ENCODE measurements at regions of chr11 and their contacts with region 1.

Region 1: GRCh38 chr11:63738720-63739360 is 29.7 kb downstream of the ZFTA start:
- DNase-seq: peak; percentile 39 to 79 (median 54)
- ATAC-seq: no peak
- H3K4me3 ChIP-seq: no peak overlapping the region
- H3K4me3 Mint-ChIP-seq: no peak overlapping the region
- H3K27ac ChIP-seq: no peak overlapping the region
- H3K27ac Mint-ChIP-seq: no peak overlapping the region
- H3K4me1 ChIP-seq: no peaks in the 10 kb centered on the region
- H3K4me1 Mint-ChIP-seq: peaks cover 11% of the 10 kb centered on the region
- H3K27me3 ChIP-seq: no peaks in the 10 kb centered on the region
- H3K27me3 Mint-ChIP-seq: no peaks in the 10 kb centered on the region
- CTCF ChIP-seq: peak; percentile 99

Region 2: GRCh38 chr11:63042596-63042995 is 696.2 kb before region 1 on chr11:
- CTCF ChIA-PET with region 1: no interaction called
- POLR2A ChIA-PET with region 1: no interaction called
- intact Hi-C with region 1: loop called in 1 of 2 experiments (anchors 5 kb)
- DNase-seq: no peak
- ATAC-seq: no peak
- H3K4me3 ChIP-seq: no peak overlapping the region
- H3K4me3 Mint-ChIP-seq: no peak overlapping the region
- H3K27ac ChIP-seq: no peak overlapping the region
- H3K27ac Mint-ChIP-seq: no peak overlapping the region
- H3K4me1 ChIP-seq: no peaks in the 10 kb centered on the region
- H3K4me1 Mint-ChIP-seq: no peaks in the 10 kb centered on the region
- H3K27me3 ChIP-seq: peaks cover 4 to 7% of the 10 kb centered on the region in 2 experiments
- H3K27me3 Mint-ChIP-seq: peaks cover 52% of the 10 kb centered on the region
- CTCF ChIP-seq: no peak

Region 3: GRCh38 chr11:63478896-63479295 is 259.9 kb before region 1 on chr11:
- CTCF ChIA-PET with region 1: no interaction called
- POLR2A ChIA-PET with region 1: no interaction called
- intact Hi-C with region 1: loop called (anchors 1 kb)
- DNase-seq: peak; percentile 18 to 79 (median 38)
- ATAC-seq: peak; percentile 61
- H3K4me3 ChIP-seq: no peak overlapping the region
- H3K4me3 Mint-ChIP-seq: no peak overlapping the region
- H3K27ac ChIP-seq: no peak overlapping the region
- H3K27ac Mint-ChIP-seq: no peak overlapping the region
- H3K4me1 ChIP-seq: peaks cover 2% of the 10 kb centered on the region
- H3K4me1 Mint-ChIP-seq: no peaks in the 10 kb centered on the region
- H3K27me3 ChIP-seq: no peaks in the 10 kb centered on the region
- H3K27me3 Mint-ChIP-seq: peaks cover 12% of the 10 kb centered on the region
- CTCF ChIP-seq: peak; percentile 93

Region 4: GRCh38 chr11:63635762-63636465 is 102.9 kb before region 1 on chr11:
- CTCF ChIA-PET with region 1: interaction called, 5 read pairs
- POLR2A ChIA-PET with region 1: no interaction called
- intact Hi-C with region 1: loop called (anchors 2 kb)
- DNase-seq: peak; percentile 59 to 84 (median 70)
- ATAC-seq: peak; percentile 93
- H3K4me3 ChIP-seq: no peak overlapping the region
- H3K4me3 Mint-ChIP-seq: no peak overlapping the region
- H3K27ac ChIP-seq: no peak overlapping the region
- H3K27ac Mint-ChIP-seq: no peak overlapping the region
- H3K4me1 ChIP-seq: peaks cover 5% of the 10 kb centered on the region
- H3K4me1 Mint-ChIP-seq: peaks cover 16% of the 10 kb centered on the region
- H3K27me3 ChIP-seq: no peaks in the 10 kb centered on the region
- H3K27me3 Mint-ChIP-seq: no peaks in the 10 kb centered on the region
- CTCF ChIP-seq: peak; percentile 86

Region 5: GRCh38 chr11:63641727-63642126 is 97.1 kb before region 1 on chr11:
- CTCF ChIA-PET with region 1: interaction called, 5 read pairs
- POLR2A ChIA-PET with region 1: no interaction called
- intact Hi-C with region 1: loop called (anchors 1 to 2 kb)
- DNase-seq: no peak
- ATAC-seq: no peak
- H3K4me3 ChIP-seq: no peak overlapping the region
- H3K4me3 Mint-ChIP-seq: no peak overlapping the region
- H3K27ac ChIP-seq: no peak overlapping the region
- H3K27ac Mint-ChIP-seq: peak overlapping the region; percentile 10
- H3K4me1 ChIP-seq: no peaks in the 10 kb centered on the region
- H3K4me1 Mint-ChIP-seq: peaks cover 10% of the 10 kb centered on the region
- H3K27me3 ChIP-seq: no peaks in the 10 kb centered on the region
- H3K27me3 Mint-ChIP-seq: no peaks in the 10 kb centered on the region
- CTCF ChIP-seq: no peak

Region 6: GRCh38 chr11:63671322-63672155 is 67.3 kb before region 1 on chr11 and contains the start of gene ATL3:
- CTCF ChIA-PET with region 1: interaction called, 11 read pairs
- POLR2A ChIA-PET with region 1: interaction called, 6 read pairs
- intact Hi-C with region 1: loop called in 1 of 2 experiments (anchors 1 kb)
- DNase-seq: peak; percentile 88 to 98 (median 96)
- ATAC-seq: peak; percentile 93
- H3K4me3 ChIP-seq: peak within 1 kb of the TSS; percentile 80
- H3K4me3 Mint-ChIP-seq: peak within 1 kb of the TSS; percentile 88
- H3K27ac ChIP-seq: peak within 1 kb of the TSS; percentile 64 to 75
- H3K27ac Mint-ChIP-seq: peak within 1 kb of the TSS; percentile 82
- H3K4me1 ChIP-seq: peaks cover 23% of the 10 kb centered on the region
- H3K4me1 Mint-ChIP-seq: peaks cover 31% of the 10 kb centered on the region
- H3K27me3 ChIP-seq: no peaks in the 10 kb centered on the region
- H3K27me3 Mint-ChIP-seq: no peaks in the 10 kb centered on the region
- CTCF ChIP-seq: peak; percentile 11
- total RNA-seq, gene ATL3: 14.5 to 16.5 TPM

Region 7: DNA sequence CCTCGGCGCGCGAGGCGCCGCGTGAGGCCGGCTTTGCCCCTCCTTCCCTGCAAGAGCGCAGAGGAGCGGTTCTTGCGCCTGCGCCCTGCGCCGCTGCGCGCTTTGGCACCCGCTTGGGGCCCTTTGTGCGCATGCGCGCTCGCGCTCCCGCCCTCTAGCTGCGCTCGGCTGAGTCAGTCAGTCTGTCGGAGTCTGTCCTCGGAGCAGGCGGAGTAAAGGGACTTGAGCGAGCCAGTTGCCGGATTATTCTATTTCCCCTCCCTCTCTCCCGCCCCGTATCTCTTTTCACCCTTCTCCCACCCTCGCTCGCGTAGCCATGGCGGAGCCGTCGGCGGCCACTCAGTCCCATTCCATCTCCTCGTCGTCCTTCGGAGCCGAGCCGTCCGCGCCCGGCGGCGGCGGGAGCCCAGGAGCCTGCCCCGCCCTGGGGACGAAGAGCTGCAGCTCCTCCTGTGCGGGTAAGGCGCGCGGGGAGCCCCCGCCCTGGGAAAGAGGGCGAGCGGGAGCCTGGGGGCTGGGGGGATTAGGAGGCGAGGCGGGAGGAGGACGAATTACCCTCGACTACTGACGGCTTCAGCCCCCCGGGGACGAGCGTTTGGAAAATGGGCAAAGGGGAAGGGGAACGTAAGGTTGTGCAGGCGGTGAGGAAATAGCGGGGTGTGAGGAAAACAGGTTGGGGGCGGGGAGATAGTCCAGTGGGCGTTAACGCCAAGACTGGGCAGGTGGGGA is 57.4 kb before region 1 on chr11 and contains the start of gene RTN3:
- CTCF ChIA-PET with region 1: interaction called, 5 read pairs
- POLR2A ChIA-PET with region 1: interaction called, 5 read pairs
- intact Hi-C with region 1: loop called in 1 of 2 experiments (anchors 5 kb)
- DNase-seq: peak; percentile 94 to 100 (median 98)
- ATAC-seq: peak; percentile 90
- H3K4me3 ChIP-seq: peak within 1 kb of the TSS; percentile 94
- H3K4me3 Mint-ChIP-seq: peak within 1 kb of the TSS; percentile 85
- H3K27ac ChIP-seq: peak within 1 kb of the TSS; percentile 62 to 92
- H3K27ac Mint-ChIP-seq: peak within 1 kb of the TSS; percentile 59
- H3K4me1 ChIP-seq: peaks cover 18% of the 10 kb centered on the region
- H3K4me1 Mint-ChIP-seq: peaks cover 31% of the 10 kb centered on the region
- H3K27me3 ChIP-seq: no peaks in the 10 kb centered on the region
- H3K27me3 Mint-ChIP-seq: no peaks in the 10 kb centered on the region
- CTCF ChIP-seq: no peak
- total RNA-seq, gene RTN3: 16.4 to 17.6 TPM

Region 8: DNA sequence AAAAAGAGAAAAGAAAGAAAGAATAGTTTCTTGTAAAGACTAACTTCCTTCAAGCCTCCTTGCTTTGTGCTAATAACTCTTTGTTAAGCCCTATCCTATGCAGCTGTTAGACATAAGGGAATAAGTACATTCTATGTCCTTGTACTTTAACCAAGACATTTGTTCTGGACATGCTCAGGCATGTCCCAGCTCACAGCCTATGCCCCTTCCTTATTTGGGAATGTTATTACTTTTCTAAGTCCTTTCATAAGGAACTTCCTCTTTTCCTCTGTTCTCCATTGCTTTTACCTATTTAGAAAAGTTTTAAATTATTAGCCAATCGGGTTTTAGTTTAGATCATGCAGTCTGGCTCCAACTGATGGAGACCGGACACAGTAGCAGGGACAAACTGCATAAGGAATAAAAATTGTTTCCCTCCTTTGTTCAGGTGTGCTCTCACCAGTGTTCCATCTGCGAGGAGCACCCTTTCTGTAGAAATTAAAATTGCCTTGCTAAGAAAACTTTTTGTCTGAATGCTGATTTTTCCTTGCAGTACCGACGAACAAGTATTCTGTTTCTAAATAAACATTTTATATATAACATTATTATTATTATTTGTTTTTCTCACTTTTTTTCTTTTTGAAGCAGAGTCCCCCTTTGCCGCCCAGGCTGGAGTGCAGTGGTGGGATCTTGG is 52.8 kb after region 1 on chr11:
- CTCF ChIA-PET with region 1: no interaction called
- POLR2A ChIA-PET with region 1: no interaction called
- intact Hi-C with region 1: no loop called
- DNase-seq: no peak
- ATAC-seq: no peak
- H3K4me3 ChIP-seq: no peak overlapping the region
- H3K4me3 Mint-ChIP-seq: no peak overlapping the region
- H3K27ac ChIP-seq: no peak overlapping the region
- H3K27ac Mint-ChIP-seq: no peak overlapping the region
- H3K4me1 ChIP-seq: no peaks in the 10 kb centered on the region
- H3K4me1 Mint-ChIP-seq: no peaks in the 10 kb centered on the region
- H3K27me3 ChIP-seq: no peaks in the 10 kb centered on the region
- H3K27me3 Mint-ChIP-seq: peaks cover 4% of the 10 kb centered on the region
- CTCF ChIP-seq: no peak

Region 9: DNA sequence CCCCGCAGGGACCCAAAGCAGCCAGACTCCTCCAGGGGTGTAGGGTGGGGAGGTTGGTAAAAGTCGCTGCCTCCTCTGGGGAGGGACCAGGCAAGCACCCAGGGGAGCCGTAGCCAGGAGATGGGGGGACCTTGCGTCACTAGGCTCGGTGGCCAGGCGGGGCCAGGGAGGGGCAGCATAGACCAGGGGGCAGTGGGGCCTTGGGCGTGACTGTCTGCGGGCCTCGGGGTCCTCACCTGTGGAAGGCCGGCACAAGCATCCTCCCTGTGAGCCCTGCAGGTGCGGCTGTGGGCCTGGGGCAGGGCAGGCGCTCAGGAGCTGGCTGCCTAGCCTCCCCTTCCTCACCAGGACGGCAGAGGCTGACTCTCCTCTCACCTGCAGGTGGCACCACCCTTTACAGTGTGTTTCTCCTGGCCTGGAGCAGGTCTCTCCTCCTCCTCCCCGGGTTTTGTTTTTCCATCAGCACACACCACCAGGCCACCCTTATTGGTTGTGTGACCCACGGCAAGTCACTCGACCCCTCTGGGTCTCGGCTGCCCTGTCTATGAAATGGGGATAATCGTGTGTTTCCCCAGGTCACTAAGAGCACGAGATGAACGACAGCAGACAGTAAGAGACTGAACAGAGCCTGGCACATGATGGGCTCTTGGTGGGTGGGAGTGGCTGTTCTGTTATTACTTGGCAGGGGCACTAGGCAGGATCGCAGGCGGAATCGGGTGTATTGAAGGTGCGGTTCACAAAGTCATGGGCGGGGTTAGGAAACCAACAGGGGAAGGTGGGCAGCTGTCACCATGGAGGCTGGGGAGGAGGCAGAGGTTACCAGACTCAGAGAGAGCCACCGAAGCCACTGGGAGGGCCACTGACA is 349.6 kb after region 1 on chr11:
- CTCF ChIA-PET with region 1: no interaction called
- POLR2A ChIA-PET with region 1: no interaction called
- intact Hi-C with region 1: no loop called
- DNase-seq: no peak
- ATAC-seq: no peak
- H3K4me3 ChIP-seq: no peak overlapping the region
- H3K4me3 Mint-ChIP-seq: no peak overlapping the region
- H3K27ac ChIP-seq: no peak overlapping the region
- H3K27ac Mint-ChIP-seq: no peak overlapping the region
- H3K4me1 ChIP-seq: peaks cover 3% of the 10 kb centered on the region
- H3K4me1 Mint-ChIP-seq: no peaks in the 10 kb centered on the region
- H3K27me3 ChIP-seq: no peaks in the 10 kb centered on the region
- H3K27me3 Mint-ChIP-seq: no peaks in the 10 kb centered on the region
- CTCF ChIP-seq: no peak

Measured in CD4-positive, alpha-beta T cell (primary cell).